Aorta (tissue), 5 donors: ENCODE measurements at regions of chr11 and their contacts with region 1.

Region 1: GRCh38 chr11:447923-448731 is 2.0 kb upstream of the PTDSS2 start:
- DNase-seq: peak; percentile 96 to 99
- ATAC-seq: peak; percentile 95
- H3K4me3 ChIP-seq: peak overlapping the region; percentile 16 to 30
- H3K27ac ChIP-seq: peak overlapping the region; percentile 58 to 85
- H3K4me1 ChIP-seq: no peaks in the 10 kb centered on the region
- H3K27me3 ChIP-seq: no peaks in the 10 kb centered on the region

Region 2: GRCh38 chr11:353179-353873 is 94.8 kb before region 1 on chr11:
- intact Hi-C with region 1: no loop called
- DNase-seq: peak; percentile 93 to 94
- ATAC-seq: peak; percentile 77
- H3K4me3 ChIP-seq: no peak overlapping the region
- H3K27ac ChIP-seq: peak overlapping the region; percentile 67 to 87
- H3K4me1 ChIP-seq: no peaks in the 10 kb centered on the region
- H3K27me3 ChIP-seq: no peaks in the 10 kb centered on the region

Region 3: GRCh38 chr11:506238-506994 is 58.3 kb after region 1 on chr11:
- intact Hi-C with region 1: loop called (anchors 1 to 10 kb)
- DNase-seq: peak; percentile 99 to 100
- ATAC-seq: peak; percentile 94
- H3K4me3 ChIP-seq: peak overlapping the region; percentile 40 to 90
- H3K27ac ChIP-seq: peak overlapping the region; percentile 63 to 100
- H3K4me1 ChIP-seq: no peaks in the 10 kb centered on the region
- H3K27me3 ChIP-seq: no peaks in the 10 kb centered on the region